ENCODE measurements at regions of chr5 and their contacts with region 1.

Region 1: DNA sequence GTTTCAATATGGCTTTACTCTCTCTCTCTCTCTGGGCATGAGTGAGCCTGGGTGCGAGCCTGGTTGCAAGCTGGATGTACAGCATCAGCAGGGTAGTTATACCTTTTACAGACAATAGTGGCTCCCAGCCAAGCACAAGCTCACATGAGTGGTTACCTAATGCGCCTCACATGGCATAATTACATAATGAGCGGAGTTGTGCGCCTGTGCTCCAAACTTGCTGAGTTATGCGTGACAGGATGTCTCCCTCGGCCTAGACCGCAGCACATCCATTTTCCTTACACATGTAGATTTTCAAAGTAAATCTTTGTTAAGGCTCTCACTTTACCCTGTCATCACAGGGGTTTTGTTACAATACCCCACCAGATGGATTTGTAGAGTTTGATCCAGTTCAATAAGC is 233.5 kb upstream of the WWC1 start:
- DNase-seq: no peak
- ATAC-seq: peak in 4 of 8 donors; percentile 9 to 56 (median 20)
- H3K4me3 ChIP-seq: no peak overlapping the region
- H3K27ac ChIP-seq: peak overlapping the region in 1 of 10 donors; percentile 45
- H3K4me1 ChIP-seq: peaks cover 0 to 19% (median 10%) of the 10 kb centered on the region in 9 donors
- H3K27me3 ChIP-seq: no peaks in the 10 kb centered on the region
- CTCF ChIP-seq: no peak

Region 2: DNA sequence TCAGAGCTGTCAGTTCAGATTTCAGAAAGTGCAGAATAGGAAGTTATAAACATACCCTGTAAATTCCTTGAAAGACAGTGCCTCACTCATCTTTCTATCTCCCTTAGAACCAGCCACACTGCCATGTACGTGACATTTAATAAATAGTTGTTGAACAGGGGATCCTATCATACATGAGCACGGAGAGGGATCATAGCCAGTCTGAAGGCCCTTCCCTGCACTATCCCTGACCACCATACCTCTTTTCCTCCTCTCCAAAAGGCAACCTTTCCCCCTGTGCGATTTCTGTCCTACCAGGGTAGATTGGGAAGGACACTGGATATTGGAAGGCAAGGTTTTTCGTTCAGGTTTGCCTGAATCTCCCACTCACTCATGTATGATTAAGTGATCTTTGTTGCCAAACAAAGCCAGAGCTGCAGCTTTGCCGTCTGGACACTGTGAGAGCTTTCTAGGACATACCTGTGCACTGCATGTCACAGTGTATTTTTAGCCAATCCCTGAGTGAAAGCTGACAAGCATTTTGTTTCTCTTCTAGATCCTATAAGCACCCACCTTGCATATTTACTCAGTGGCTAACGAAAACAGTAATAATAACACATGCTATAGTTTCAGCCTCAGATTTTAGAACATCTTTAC is 753.0 kb before region 1 on chr5:
- intact Hi-C with region 1: loop called in 1 of 10 experiments (anchors 10 kb)
- DNase-seq: peak in 1 of 2 donors; percentile 8
- ATAC-seq: peak in 7 of 8 donors; percentile 23 to 94 (median 82)
- H3K4me3 ChIP-seq: no peak overlapping the region
- H3K27ac ChIP-seq: peak overlapping the region in 4 of 10 donors; percentile 20 to 67 (median 38)
- H3K4me1 ChIP-seq: peaks cover 0 to 12% (median 0%) of the 10 kb centered on the region in 9 donors
- H3K27me3 ChIP-seq: no peaks in the 10 kb centered on the region
- CTCF ChIP-seq: no peak

Measured in heart right ventricle (tissue), 16 donors.